ENCODE measurements at regions of chr16 and their contacts with region 1.

Region 1: DNA sequence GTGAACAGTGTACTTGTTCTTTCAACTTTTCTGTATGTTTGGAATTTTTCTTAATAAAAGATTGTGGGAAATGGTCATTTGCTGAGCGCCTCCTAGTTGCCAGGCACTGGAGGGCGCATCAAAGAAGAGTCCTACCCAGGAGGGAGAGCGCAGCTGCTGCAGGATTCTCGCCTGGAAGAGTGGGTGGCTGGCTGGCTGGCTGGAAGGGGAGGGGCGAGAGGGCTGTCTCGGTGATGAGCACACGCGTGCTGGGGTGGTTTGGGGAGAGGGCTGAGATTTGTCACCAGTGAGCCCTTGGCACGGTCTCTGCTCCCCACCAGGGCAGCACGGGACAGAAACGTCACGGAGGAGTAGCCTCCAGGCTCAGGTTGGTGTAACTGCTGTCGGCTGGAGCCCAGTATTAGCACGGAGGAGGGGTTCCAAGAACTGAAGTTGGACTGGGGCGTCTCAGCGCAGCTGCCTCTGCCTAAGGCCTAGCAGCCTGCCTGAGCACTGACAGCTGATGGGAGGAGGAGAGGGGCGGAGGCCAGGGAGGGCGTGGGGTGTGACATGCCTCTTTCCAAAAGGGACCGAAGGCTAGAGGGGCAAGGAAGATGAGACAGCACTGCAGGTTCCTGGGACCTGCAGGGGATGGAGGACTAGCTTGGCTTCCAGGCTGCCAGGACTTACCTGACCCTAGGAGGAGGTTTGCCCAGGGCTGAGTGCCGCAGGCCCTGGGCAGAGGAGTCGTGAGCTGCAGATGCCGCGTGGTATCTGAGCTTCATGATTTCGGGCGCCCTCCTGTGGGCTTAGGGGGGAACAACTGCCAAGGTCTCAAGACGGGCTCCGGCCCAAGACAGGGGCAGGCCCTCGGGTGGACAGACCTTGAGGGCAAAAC is 5.7 kb downstream of the LDHD start:
- DNase-seq: peak; percentile 88 to 89
- H3K4me3 ChIP-seq: no peak overlapping the region
- H3K4me3 Mint-ChIP-seq: peak overlapping the region; percentile 32
- H3K27ac Mint-ChIP-seq: peak overlapping the region; percentile 84
- H3K4me1 ChIP-seq: peaks cover 18% of the 10 kb centered on the region
- H3K4me1 Mint-ChIP-seq: peaks cover 37% of the 10 kb centered on the region
- H3K27me3 ChIP-seq: no peaks in the 10 kb centered on the region
- H3K27me3 Mint-ChIP-seq: no peaks in the 10 kb centered on the region
- CTCF ChIP-seq: peak; percentile 85 to 93

Region 2: DNA sequence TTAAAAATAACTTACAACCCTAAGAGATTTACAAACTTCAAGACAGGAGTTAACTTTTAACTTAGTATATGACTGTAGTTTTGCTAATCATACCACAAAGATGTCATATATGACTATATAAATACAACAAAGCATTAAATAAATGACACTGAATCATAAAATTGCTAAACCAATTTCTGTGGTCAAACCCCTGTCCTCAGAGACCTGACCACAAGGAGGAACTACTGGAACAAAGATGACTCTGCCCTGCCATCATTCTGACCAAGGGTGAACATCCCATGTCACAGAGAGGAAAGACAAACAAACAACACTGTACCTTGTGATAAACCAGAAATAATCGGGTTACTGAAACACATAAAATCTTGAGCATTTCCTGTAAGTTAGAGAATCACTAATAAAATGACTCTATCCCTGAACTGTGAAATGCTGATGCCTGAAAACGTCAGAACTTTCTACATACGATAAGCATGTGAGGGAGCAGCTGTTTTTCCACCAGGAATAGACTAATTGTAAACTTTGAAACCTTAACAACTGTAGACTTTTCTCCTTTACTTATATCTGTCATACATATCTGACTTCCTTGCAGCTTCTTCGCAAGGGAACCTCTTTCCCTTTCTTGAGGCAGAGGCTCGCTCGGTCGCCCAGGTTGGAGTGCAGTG is 173.8 kb before region 1 on chr16:
- CTCF ChIA-PET with region 1: interaction called, 4 read pairs
- POLR2A ChIA-PET with region 1: no interaction called
- intact Hi-C with region 1: loop called (anchors 1 kb)
- DNase-seq: no peak
- H3K4me3 ChIP-seq: no peak overlapping the region
- H3K4me3 Mint-ChIP-seq: no peak overlapping the region
- H3K27ac Mint-ChIP-seq: no peak overlapping the region
- H3K4me1 ChIP-seq: no peaks in the 10 kb centered on the region
- H3K4me1 Mint-ChIP-seq: no peaks in the 10 kb centered on the region
- H3K27me3 ChIP-seq: no peaks in the 10 kb centered on the region
- H3K27me3 Mint-ChIP-seq: no peaks in the 10 kb centered on the region
- CTCF ChIP-seq: peak in 1 of 2 experiments; percentile 23

Region 3: GRCh38 chr16:74998481-74999218 is 112.2 kb before region 1 on chr16 and contains the start of gene ZNRF1:
- CTCF ChIA-PET with region 1: interaction called, 112 read pairs
- POLR2A ChIA-PET with region 1: interaction called, 5 read pairs
- intact Hi-C with region 1: loop called (anchors 1 kb)
- DNase-seq: peak; percentile 92 to 94
- H3K4me3 ChIP-seq: peak within 1 kb of the TSS; percentile 88
- H3K4me3 Mint-ChIP-seq: peak within 1 kb of the TSS; percentile 95
- H3K27ac Mint-ChIP-seq: peak within 1 kb of the TSS; percentile 85
- H3K4me1 ChIP-seq: peaks cover 57% of the 10 kb centered on the region
- H3K4me1 Mint-ChIP-seq: peaks cover 55% of the 10 kb centered on the region
- H3K27me3 ChIP-seq: no peaks in the 10 kb centered on the region
- H3K27me3 Mint-ChIP-seq: no peaks in the 10 kb centered on the region
- CTCF ChIP-seq: peak; percentile 89 to 95
- total RNA-seq, gene ZNRF1: 68.6 and 73.8 TPM in 2 replicates

Region 4: GRCh38 chr16:75096663-75097119 is 14.2 kb before region 1 on chr16:
- CTCF ChIA-PET with region 1: interaction called, 13 read pairs
- POLR2A ChIA-PET with region 1: no interaction called
- intact Hi-C with region 1: loop called (anchors 2 kb)
- DNase-seq: peak; percentile 85 to 90
- H3K4me3 ChIP-seq: no peak overlapping the region
- H3K4me3 Mint-ChIP-seq: no peak overlapping the region
- H3K27ac Mint-ChIP-seq: peak overlapping the region; percentile 84
- H3K4me1 ChIP-seq: peaks cover 30% of the 10 kb centered on the region
- H3K4me1 Mint-ChIP-seq: peaks cover 24% of the 10 kb centered on the region
- H3K27me3 ChIP-seq: no peaks in the 10 kb centered on the region
- H3K27me3 Mint-ChIP-seq: no peaks in the 10 kb centered on the region
- CTCF ChIP-seq: peak; percentile 79 to 87

Measured in Caco-2 (cell line).